ENCODE measurements at regions of chr13 and their contacts with region 1.

Region 1: DNA sequence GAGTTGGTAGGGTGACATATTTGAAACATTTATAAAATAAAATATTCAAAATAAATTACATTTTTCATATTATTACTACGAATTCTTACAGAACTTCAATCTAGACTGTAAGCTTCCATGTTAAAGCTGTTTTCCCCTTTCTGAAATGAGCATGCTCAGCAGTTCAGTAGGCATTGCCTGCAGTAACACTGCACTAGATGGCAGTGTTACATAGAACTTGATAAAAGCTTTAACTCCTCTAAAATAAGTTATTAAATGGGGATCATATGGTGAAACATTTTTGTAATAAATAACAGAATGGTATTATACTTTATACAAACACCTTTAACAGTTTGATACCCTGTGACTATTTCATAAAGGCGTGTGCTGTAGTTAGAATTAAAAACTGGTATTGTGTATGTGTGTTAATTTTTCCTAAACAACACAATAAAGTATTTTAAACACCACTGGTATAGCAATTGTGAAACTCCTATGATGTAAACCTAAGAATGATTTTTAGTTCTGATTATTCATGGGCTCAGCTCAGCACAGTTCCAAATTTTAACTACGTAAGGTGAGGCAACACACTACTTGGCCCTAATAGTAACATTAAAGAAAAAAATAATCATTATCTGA is 11.6 kb upstream of the GPR18 start:
- DNase-seq: peak; percentile 37
- CTCF ChIP-seq: peak; percentile 79

Region 2: GRCh38 chr13:99200432-99201167 is 69.1 kb before region 1 on chr13 and contains the start of gene UBAC2:
- CTCF ChIA-PET with region 1: interaction called, 73 read pairs
- POLR2A ChIA-PET with region 1: interaction called, 9 read pairs
- DNase-seq: peak; percentile 99
- CTCF ChIP-seq: peak; percentile 6

Region 3: GRCh38 chr13:99281811-99282263 is 12.1 kb after region 1 on chr13:
- CTCF ChIA-PET with region 1: interaction called, 85 read pairs
- POLR2A ChIA-PET with region 1: interaction called, 3 read pairs
- DNase-seq: peak; percentile 42
- CTCF ChIP-seq: no peak

Region 4: DNA sequence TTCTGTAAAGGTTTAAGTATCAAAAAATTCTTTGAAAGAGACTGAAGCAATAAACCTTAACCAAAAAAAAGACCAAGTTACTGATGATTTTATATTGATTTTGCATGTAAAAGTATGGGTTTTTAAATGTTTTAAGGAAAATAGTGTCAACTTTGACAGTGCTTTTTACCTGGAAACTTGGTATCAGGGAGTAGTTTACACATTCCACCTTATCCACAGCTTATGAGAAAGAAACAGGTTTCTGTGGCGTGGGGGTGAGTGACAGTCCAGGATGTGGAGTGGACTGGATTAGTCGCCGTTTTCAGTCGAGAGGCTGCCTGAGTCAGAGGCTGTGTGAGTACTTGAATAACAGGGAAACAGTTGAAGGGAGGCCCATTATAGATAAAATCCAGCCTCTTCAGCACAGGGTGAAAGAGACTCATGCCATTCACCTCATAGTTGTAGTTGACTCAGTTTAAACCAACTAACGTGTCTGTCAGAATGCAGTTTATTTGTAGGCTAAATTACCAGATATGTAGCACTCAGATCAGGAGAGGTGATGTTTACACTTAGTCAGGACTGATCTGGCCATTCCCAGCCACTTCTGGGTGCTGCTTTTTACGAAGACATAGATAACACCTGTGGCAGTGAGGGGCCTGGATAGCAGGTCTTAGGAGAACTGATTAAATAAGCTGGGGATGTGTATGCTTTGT is 38.1 kb after region 1 on chr13:
- CTCF ChIA-PET with region 1: interaction called, 23 read pairs
- POLR2A ChIA-PET with region 1: no interaction called
- DNase-seq: no peak
- CTCF ChIP-seq: no peak

Region 5: DNA sequence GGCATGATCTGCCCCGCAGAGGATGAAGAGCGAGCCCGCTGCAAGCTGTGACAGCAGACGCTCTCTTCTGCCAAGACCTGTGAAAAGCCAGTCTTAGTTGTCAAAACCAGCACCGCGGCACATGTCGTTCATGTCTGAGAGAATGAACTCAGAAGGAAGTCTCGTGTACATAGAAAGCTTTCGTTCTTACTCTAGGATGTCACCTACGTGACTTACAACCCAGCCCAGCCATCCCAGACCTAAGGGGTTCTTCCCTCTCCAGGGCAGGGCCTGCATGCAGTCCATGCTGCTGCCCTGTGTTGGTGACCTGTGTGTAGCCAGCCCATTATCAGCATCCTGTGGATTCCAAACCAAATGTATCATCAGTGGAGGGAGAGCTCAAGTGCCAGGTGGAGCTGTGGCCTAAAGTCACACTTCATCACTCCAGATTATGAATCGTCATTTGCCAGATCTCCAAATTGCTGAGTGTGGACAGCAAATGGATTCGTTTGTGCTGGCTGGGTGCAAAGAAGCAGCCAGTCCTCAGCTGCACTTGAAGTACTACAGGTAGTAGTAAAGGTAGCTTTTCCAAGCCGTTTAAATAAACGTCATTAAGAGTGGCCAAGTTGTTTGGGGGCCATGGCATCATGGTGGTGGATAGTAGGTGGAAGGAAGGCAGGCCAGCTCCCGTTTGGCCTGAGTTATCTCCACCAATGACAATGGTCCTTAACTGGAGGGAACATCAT is 111.3 kb after region 1 on chr13:
- CTCF ChIA-PET with region 1: interaction called, 63 read pairs
- POLR2A ChIA-PET with region 1: no interaction called
- DNase-seq: peak; percentile 74
- CTCF ChIP-seq: no peak

Region 6: DNA sequence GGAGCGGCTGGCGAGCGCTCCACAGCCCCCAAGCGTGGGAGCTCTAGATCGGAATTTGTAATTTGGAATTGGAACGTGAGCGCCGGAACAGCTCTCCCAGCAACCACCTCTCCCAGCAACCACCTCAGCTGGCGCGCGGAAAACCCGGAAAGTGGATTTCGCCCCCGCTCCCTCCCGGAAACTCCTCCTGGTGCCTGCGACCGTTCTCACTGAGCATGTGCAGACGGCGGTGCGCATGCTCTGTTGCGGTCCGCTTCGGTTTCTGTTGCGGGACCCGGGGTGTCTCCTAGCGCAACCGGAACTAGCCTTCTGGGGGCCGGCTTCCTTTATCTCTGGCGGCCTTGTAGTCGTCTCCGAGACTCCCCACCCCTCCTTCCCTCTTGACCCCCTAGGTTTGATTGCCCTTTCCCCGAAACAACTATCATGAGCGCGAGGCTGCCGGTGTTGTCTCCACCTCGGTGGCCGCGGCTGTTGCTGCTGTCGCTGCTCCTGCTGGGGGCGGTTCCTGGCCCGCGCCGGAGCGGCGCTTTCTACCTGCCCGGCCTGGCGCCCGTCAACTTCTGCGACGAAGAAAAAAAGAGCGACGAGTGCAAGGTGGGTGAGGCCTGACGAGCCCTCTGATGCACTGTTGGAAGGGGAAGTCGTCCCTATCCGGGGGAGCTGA is 231.6 kb after region 1 on chr13 and contains the start of gene TM9SF2:
- CTCF ChIA-PET with region 1: interaction called, 12 read pairs
- POLR2A ChIA-PET with region 1: no interaction called
- DNase-seq: peak; percentile 92
- CTCF ChIP-seq: no peak